GM12878 (cell line): ENCODE measurements at regions of chr6 and their contacts with region 1.

Region 1: GRCh38 chr6:63352587-63353285 is 33.0 kb upstream of the LGSN start:
- DNase-seq: peak; percentile 88
- ATAC-seq: peak; percentile 94
- H3K4me3 ChIP-seq: peak overlapping the region; percentile 56
- H3K27ac ChIP-seq: peak overlapping the region; percentile 95
- H3K4me1 ChIP-seq: peaks cover 11% of the 10 kb centered on the region
- H3K27me3 ChIP-seq: no peaks in the 10 kb centered on the region
- CTCF ChIP-seq: peak; percentile 62 to 90 (median 82)
- EP300 ChIP-seq: peak; percentile 89 to 93
- POLR2A ChIP-seq: no peak
- RAD21 ChIP-seq: peak; percentile 98

Region 2: DNA sequence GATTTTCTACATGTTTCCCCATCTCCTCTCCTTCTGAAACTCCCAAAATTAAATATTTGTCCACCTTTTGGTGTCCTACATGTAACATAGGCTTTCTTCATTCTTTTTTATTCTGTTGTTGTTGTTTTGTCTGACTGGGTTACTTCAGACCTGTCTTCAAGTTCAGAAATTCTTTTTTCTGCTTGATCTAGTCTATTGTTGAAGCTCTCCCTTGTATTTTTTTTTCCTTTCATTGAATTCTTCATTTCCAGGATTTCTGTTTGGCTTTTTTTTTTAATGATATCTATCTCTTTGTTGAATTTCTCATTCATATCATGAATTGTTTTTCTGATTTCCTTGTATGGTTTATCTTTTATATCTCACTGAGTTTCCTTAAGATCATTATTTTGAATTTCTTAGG is 12.4 kb before region 1 on chr6:
- CTCF ChIA-PET with region 1: interaction called, 20 read pairs
- POLR2A ChIA-PET with region 1: no interaction called
- RAD21 ChIA-PET with region 1: no interaction called
- SMC1A ChIA-PET with region 1: interaction called, 3 read pairs
- in situ Hi-C with region 1: no loop called
- intact Hi-C with region 1: no loop called
- DNase-seq: no peak
- ATAC-seq: no peak
- H3K4me3 ChIP-seq: no peak overlapping the region
- H3K27ac ChIP-seq: no peak overlapping the region
- H3K4me1 ChIP-seq: no peaks in the 10 kb centered on the region
- H3K27me3 ChIP-seq: no peaks in the 10 kb centered on the region
- CTCF ChIP-seq: no peak
- EP300 ChIP-seq: no peak
- POLR2A ChIP-seq: no peak
- RAD21 ChIP-seq: no peak

Region 3: DNA sequence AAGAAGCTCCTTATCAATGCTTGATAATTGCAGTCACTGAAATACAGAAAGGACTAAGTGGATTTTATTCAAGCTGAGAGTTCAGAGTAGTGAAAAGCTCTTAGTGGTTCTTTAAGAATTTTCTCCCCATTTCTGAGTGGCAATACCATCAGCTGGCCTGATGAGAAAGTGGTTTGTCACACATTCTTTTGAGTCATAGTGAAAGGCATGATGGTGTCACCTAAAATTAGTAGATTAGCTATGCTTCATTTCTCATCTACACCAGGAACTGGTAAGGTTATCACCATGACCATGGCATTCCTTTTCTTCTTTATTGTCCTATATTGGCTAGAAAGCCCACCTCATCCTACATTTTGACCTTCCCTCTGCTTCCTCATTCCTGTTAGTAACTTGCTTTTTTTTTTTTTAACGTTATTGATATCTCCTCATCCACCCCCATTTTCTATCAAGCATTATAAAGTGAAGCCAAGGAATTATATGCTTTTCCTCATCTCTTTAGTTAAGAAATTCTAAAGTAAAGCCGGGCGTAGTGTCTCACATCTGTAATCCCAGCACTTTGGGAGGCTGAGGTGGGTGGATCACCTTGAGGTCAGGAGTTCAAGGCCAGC is 152.1 kb after region 1 on chr6:
- CTCF ChIA-PET with region 1: interaction called, 30 read pairs
- POLR2A ChIA-PET with region 1: interaction called, 8 read pairs
- RAD21 ChIA-PET with region 1: interaction called, 48 read pairs
- SMC1A ChIA-PET with region 1: interaction called, 30 read pairs
- in situ Hi-C with region 1: no loop called
- intact Hi-C with region 1: loop called (anchors 1 kb)
- DNase-seq: peak; percentile 89
- ATAC-seq: peak; percentile 93
- H3K4me3 ChIP-seq: 0 out of 2 replicates have a peak overlapping the region, but pooled peaks have one; percentile 18
- H3K27ac ChIP-seq: peak overlapping the region; percentile 66
- H3K4me1 ChIP-seq: peaks cover 30% of the 10 kb centered on the region
- H3K27me3 ChIP-seq: no peaks in the 10 kb centered on the region
- CTCF ChIP-seq: no peak
- EP300 ChIP-seq: peak; percentile 92 to 98
- POLR2A ChIP-seq: no peak
- RAD21 ChIP-seq: peak; percentile 29; the same call in 1 of the 2 replicates

Region 4: DNA sequence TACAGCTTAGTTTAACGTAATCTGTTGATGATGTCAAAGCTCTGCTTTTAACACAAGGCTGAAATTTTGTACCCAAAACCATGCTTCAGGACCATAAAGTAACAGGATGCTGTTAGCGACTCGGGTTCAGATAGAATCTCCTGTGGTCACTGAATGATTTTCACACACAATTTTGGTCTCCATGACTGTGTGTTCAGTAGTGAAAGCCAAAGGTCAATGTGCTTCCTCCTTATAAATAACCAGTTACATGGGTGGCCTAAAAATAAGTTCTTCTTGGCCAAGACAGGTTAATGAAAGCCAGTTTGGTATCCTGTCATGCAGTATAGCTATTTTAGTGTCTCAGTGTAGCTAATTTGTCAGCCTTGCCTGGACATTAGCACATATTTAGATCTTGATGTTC is 200.5 kb after region 1 on chr6:
- CTCF ChIA-PET with region 1: interaction called, 15 read pairs
- POLR2A ChIA-PET with region 1: no interaction called
- RAD21 ChIA-PET with region 1: interaction called, 11 read pairs
- SMC1A ChIA-PET with region 1: interaction called, 14 read pairs
- in situ Hi-C with region 1: no loop called
- intact Hi-C with region 1: no loop called
- DNase-seq: peak; percentile 81
- ATAC-seq: peak; percentile 98
- H3K4me3 ChIP-seq: no peak overlapping the region
- H3K27ac ChIP-seq: no peak overlapping the region
- H3K4me1 ChIP-seq: peaks cover 11% of the 10 kb centered on the region; the same call in 1 of the 2 replicates
- H3K27me3 ChIP-seq: no peaks in the 10 kb centered on the region
- CTCF ChIP-seq: no peak
- EP300 ChIP-seq: peak; percentile 71 to 94; a peak in 3 of 4 replicates
- POLR2A ChIP-seq: no peak
- RAD21 ChIP-seq: no peak

Region 5: GRCh38 chr6:63589927-63590411 is 237.2 kb after region 1 on chr6:
- CTCF ChIA-PET with region 1: interaction called, 15 read pairs
- POLR2A ChIA-PET with region 1: no interaction called
- RAD21 ChIA-PET with region 1: interaction called, 8 read pairs
- SMC1A ChIA-PET with region 1: interaction called, 10 read pairs
- in situ Hi-C with region 1: loop called (anchors 5 kb)
- intact Hi-C with region 1: no loop called
- DNase-seq: no peak
- ATAC-seq: no peak
- H3K4me3 ChIP-seq: no peak overlapping the region
- H3K27ac ChIP-seq: no peak overlapping the region
- H3K4me1 ChIP-seq: no peaks in the 10 kb centered on the region
- H3K27me3 ChIP-seq: no peaks in the 10 kb centered on the region
- CTCF ChIP-seq: no peak
- EP300 ChIP-seq: no peak
- POLR2A ChIP-seq: no peak
- RAD21 ChIP-seq: no peak

Region 6: DNA sequence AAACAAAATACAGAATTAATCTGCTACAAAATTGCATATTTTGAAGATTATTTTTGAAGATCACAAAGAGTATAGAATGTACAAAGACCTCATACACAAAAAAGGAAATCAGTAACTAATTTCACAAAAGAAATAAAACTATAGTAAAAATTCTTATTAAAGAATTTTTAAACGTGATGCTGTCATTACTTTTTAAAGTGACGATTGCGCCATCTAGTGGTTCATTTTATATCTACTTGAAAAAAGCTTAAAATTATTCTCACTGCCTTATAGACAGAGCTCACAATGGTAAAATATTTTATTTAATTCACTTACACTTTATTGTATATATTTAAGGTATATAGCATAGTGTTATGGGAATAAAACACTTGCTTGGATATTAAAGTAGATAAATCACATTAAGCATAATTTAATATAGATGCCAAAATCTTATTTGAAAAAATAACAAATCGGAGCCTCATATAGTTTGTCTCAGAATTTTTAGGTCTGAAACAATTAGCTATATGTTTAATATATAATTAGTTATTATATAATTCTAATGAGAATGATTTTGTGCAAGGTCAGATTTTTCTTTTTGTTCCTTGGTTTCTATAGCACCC is 411.7 kb after region 1 on chr6:
- CTCF ChIA-PET with region 1: interaction called, 159 read pairs
- POLR2A ChIA-PET with region 1: interaction called, 4 read pairs
- RAD21 ChIA-PET with region 1: interaction called, 114 read pairs
- SMC1A ChIA-PET with region 1: interaction called, 218 read pairs
- in situ Hi-C with region 1: loop called (anchors 5 kb)
- intact Hi-C with region 1: loop called (anchors 1 kb)
- DNase-seq: peak; percentile 5
- ATAC-seq: peak; percentile 64
- H3K4me3 ChIP-seq: no peak overlapping the region
- H3K27ac ChIP-seq: no peak overlapping the region
- H3K4me1 ChIP-seq: no peaks in the 10 kb centered on the region
- H3K27me3 ChIP-seq: no peaks in the 10 kb centered on the region
- CTCF ChIP-seq: no peak; a peak in 2 of 6 replicates
- EP300 ChIP-seq: no peak
- POLR2A ChIP-seq: no peak
- RAD21 ChIP-seq: peak; percentile 63

Region 7: DNA sequence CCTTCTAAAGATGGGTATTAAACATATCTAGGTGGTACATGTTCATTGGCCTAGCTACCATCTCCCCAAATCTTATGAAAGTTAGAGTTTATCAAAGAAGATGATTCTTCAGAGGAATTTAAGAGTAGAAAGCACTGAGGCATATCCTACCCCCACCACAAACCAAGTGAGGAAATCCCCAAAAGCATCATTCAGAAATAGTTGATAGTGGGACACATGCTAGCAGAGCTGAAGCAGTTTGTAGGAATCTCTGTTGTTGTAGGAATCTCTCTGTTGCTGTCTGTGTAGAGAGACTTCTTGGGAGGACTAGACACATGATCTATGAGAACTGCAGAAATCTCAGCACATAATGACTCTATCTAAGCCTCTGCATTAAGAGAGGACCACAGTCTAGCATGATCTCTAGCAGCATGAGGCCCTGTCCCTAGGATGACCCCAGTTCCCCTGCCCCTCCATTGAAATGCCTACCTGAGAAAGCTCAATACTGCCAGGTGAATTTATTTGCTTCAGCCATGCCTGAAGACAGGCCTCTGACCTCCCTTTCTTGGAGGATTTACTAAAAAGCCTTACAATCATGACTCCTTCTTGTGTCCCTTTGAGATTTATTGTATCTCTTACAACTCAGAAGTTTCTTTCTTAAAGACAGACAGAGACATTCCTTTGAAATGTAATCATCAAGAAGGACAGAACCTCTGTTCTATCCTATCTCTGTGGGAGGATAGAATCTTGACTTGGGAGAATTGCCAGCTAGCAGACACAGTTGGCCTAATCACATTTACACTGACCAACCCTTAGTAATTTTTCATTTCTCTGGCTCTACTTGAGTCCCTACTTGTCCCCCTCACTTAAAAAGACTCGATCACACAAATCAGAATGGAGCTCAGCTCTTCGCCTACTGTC is 865.2 kb after region 1 on chr6:
- CTCF ChIA-PET with region 1: no interaction called
- POLR2A ChIA-PET with region 1: no interaction called
- RAD21 ChIA-PET with region 1: no interaction called
- SMC1A ChIA-PET with region 1: no interaction called
- in situ Hi-C with region 1: no loop called
- intact Hi-C with region 1: no loop called
- DNase-seq: peak; percentile 38
- ATAC-seq: peak; percentile 91
- H3K4me3 ChIP-seq: no peak overlapping the region
- H3K27ac ChIP-seq: peak overlapping the region; percentile 18; the same call in 1 of the 2 replicates
- H3K4me1 ChIP-seq: peaks cover 8% of the 10 kb centered on the region
- H3K27me3 ChIP-seq: no peaks in the 10 kb centered on the region
- CTCF ChIP-seq: no peak
- EP300 ChIP-seq: peak in 1 of 2 experiments; percentile 11; a peak in 1 of 4 replicates
- POLR2A ChIP-seq: no peak
- RAD21 ChIP-seq: no peak

Region 8: GRCh38 chr6:64330694-64331307 is 978.1 kb after region 1 on chr6:
- CTCF ChIA-PET with region 1: interaction called, 17 read pairs
- POLR2A ChIA-PET with region 1: no interaction called
- RAD21 ChIA-PET with region 1: interaction called, 16 read pairs
- SMC1A ChIA-PET with region 1: interaction called, 3 read pairs
- in situ Hi-C with region 1: no loop called
- intact Hi-C with region 1: no loop called
- DNase-seq: peak; percentile 11
- ATAC-seq: peak; percentile 88
- H3K4me3 ChIP-seq: no peak overlapping the region
- H3K27ac ChIP-seq: no peak overlapping the region
- H3K4me1 ChIP-seq: no peaks in the 10 kb centered on the region
- H3K27me3 ChIP-seq: no peaks in the 10 kb centered on the region
- CTCF ChIP-seq: peak; percentile 68 to 79 (median 71)
- EP300 ChIP-seq: no peak
- POLR2A ChIP-seq: no peak
- RAD21 ChIP-seq: peak; percentile 82